ENCODE measurements at regions of chr15 and their contacts with region 1.

Region 1: DNA sequence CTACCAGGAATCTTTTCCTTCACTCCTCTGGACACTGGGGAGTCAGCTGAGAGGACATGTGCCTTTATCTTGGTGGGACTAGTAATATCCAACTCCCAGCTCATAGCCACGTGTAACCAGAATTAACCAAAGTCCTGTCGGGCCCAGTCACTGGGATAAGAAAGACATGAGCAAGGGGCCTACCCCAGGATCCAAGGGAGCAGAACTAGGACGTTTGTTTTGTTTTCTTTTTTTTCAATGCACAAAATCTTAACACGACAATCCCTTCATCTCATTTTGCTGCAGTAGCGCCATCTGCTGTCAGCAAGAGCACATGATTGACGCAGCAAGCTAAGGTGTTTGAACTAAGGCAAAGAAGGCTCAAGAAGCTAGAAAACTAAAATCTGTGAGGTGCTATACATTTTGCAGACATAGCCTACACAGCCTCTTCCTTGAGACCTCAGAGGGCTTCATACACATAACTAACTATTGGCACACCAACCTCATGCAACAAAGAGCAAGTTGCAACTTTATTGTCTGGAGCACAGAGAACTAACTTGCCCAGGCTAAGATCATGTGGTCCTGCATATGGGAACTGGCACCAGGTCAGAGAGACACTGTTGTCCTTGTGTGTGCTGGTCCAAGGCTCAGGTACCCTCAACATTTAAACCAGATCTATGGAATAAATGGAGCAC is 43.6 kb downstream of the RLBP1 start:
- DNase-seq: peak; percentile 44 to 79
- H3K4me3 ChIP-seq: no peak overlapping the region
- H3K27ac ChIP-seq: peak overlapping the region; percentile 39 to 56
- H3K4me1 ChIP-seq: peaks cover 0 to 58% (median 26%) of the 10 kb centered on the region in 4 donors
- H3K27me3 ChIP-seq: no peaks in the 10 kb centered on the region
- CTCF ChIP-seq: peak; percentile 77 to 93

Region 2: DNA sequence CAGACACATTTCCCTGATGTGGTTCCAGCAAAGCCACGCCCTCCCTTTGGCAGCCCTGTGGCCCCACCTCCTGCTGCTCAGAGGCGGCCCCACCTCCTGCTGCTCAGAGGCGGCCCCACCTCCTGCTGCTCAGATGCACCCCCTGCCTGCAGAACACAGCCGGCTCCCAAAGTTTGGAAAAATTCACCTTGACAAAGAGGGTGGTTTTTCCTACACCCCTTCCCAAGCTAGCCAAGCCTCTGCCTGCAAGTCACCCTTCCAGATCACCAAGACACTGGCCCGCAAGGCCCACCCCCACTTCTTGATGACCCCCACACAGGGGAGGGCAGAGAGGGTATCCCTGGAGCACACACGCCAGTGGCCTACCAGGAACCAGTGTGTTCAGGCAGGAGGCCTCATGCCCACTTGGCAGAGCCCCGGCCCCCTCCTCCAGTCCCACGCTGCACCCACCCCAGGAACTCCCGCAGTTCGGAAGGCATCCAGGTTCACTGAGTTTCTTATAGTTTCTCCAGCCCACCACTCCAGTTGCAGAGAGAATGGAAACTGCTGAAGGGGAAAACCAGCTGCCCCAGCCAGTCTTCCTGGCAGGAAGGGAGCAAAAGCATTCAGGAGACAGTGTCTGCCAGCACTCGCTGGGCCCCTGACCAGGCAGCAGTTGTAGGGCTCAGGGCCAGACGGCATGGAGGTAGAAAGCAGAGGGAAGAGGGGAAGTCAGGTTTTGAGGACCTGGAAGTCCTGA is 280.1 kb before region 1 on chr15:
- intact Hi-C with region 1: loop called (anchors 5 kb)
- DNase-seq: peak; percentile 82 to 95
- H3K4me3 ChIP-seq: peak overlapping the region in 1 of 2 donors; percentile 15
- H3K27ac ChIP-seq: peak overlapping the region; percentile 78 to 87
- H3K4me1 ChIP-seq: peaks cover 0 to 85% (median 70%) of the 10 kb centered on the region in 4 donors
- H3K27me3 ChIP-seq: no peaks in the 10 kb centered on the region
- CTCF ChIP-seq: peak; percentile 61 to 72

Region 3: GRCh38 chr15:89057504-89058133 is 120.2 kb before region 1 on chr15:
- intact Hi-C with region 1: loop called (anchors 5 kb)
- DNase-seq: peak; percentile 83 to 90
- H3K4me3 ChIP-seq: no peak overlapping the region
- H3K27ac ChIP-seq: peak overlapping the region; percentile 60 to 84
- H3K4me1 ChIP-seq: peaks cover 0 to 66% (median 31%) of the 10 kb centered on the region in 4 donors
- H3K27me3 ChIP-seq: no peaks in the 10 kb centered on the region
- CTCF ChIP-seq: peak; percentile 98 to 99

Region 4: GRCh38 chr15:89293012-89293411 is 115.2 kb after region 1 on chr15:
- intact Hi-C with region 1: no loop called
- DNase-seq: no peak
- H3K4me3 ChIP-seq: no peak overlapping the region
- H3K27ac ChIP-seq: no peak overlapping the region
- H3K4me1 ChIP-seq: no peaks in the 10 kb centered on the region
- H3K27me3 ChIP-seq: no peaks in the 10 kb centered on the region
- CTCF ChIP-seq: no peak

Measured in tibial artery (tissue), 4 donors.